Naive thymus-derived CD4-positive, alpha-beta T cell (primary cell): ENCODE measurements at regions of chr6 and their contacts with region 1.

Region 1: DNA sequence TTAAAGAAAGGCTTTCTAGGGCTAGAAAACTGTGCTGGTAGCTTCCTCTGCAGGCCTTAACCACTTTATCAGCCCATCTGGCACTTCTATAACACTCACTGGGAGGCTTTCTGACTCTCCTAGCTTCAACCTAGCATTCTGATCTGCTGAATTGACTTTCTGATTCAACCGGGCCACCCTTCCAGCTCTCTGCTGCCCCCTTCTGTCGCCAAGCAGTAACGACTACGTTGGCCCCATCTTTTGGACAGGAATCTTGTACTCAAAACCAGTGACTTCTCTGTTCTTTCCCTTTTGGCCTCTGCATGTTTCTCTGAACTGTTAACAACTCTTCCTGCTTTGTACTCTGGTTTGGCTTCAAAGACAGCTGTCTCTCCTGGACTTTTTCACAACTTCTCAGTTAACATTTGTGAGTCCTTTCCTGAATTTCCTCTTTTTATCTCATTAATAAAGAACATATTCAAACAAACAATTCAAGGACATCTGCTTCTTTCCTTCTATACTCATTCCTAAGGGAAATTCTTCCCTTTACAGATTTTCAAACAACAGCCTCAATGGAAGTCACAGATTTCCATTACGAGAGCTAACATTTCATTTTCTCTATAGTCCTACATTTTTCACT is 43.9 kb upstream of the FAM135A start:
- DNase-seq: peak; percentile 26 to 64 (median 58)
- ATAC-seq: peak; percentile 92
- H3K4me3 ChIP-seq: no peak overlapping the region
- H3K4me3 Mint-ChIP-seq: no peak overlapping the region
- H3K27ac ChIP-seq: no peak overlapping the region
- H3K27ac Mint-ChIP-seq: no peak overlapping the region
- H3K4me1 ChIP-seq: no peaks in the 10 kb centered on the region
- H3K4me1 Mint-ChIP-seq: peaks cover 0 to 7% (median 0%) of the 10 kb centered on the region in 7 donors
- H3K27me3 ChIP-seq: no peaks in the 10 kb centered on the region
- H3K27me3 Mint-ChIP-seq: peaks cover 10 to 39% (median 19%) of the 10 kb centered on the region in 5 donors

Region 2: GRCh38 chr6:70221025-70221714 is 148.3 kb before region 1 on chr6:
- CTCF ChIA-PET with region 1: interaction called, 10 read pairs
- POLR2A ChIA-PET with region 1: no interaction called
- intact Hi-C with region 1: loop called in 1 of 2 experiments (anchors 1 kb)
- DNase-seq: peak in 4 of 9 donors; percentile 3 to 16 (median 11)
- ATAC-seq: peak; percentile 50
- H3K4me3 ChIP-seq: no peak overlapping the region
- H3K4me3 Mint-ChIP-seq: no peak overlapping the region
- H3K27ac ChIP-seq: no peak overlapping the region
- H3K27ac Mint-ChIP-seq: no peak overlapping the region
- H3K4me1 ChIP-seq: no peaks in the 10 kb centered on the region
- H3K4me1 Mint-ChIP-seq: peaks cover 0 to 1% (median 0%) of the 10 kb centered on the region in 7 donors
- H3K27me3 ChIP-seq: no peaks in the 10 kb centered on the region
- H3K27me3 Mint-ChIP-seq: peaks cover 4 to 31% (median 7%) of the 10 kb centered on the region in 5 donors

Region 3: GRCh38 chr6:70310063-70310694 is 59.3 kb before region 1 on chr6:
- CTCF ChIA-PET with region 1: interaction called, 11 read pairs
- POLR2A ChIA-PET with region 1: no interaction called
- intact Hi-C with region 1: loop called (anchors 1 kb)
- DNase-seq: peak in 5 of 9 donors; percentile 7 to 21 (median 11)
- ATAC-seq: no peak
- H3K4me3 ChIP-seq: no peak overlapping the region
- H3K4me3 Mint-ChIP-seq: no peak overlapping the region
- H3K27ac ChIP-seq: no peak overlapping the region
- H3K27ac Mint-ChIP-seq: no peak overlapping the region
- H3K4me1 ChIP-seq: no peaks in the 10 kb centered on the region
- H3K4me1 Mint-ChIP-seq: peaks cover 0 to under 1% (median 0%) of the 10 kb centered on the region in 7 donors
- H3K27me3 ChIP-seq: no peaks in the 10 kb centered on the region
- H3K27me3 Mint-ChIP-seq: peaks cover 9 to 41% (median 28%) of the 10 kb centered on the region in 5 donors

Region 4: GRCh38 chr6:70398783-70399728 is 29.6 kb after region 1 on chr6:
- CTCF ChIA-PET with region 1: no interaction called
- POLR2A ChIA-PET with region 1: no interaction called
- intact Hi-C with region 1: no loop called
- DNase-seq: no peak
- ATAC-seq: no peak
- H3K4me3 ChIP-seq: no peak overlapping the region
- H3K4me3 Mint-ChIP-seq: no peak overlapping the region
- H3K27ac ChIP-seq: no peak overlapping the region
- H3K27ac Mint-ChIP-seq: no peak overlapping the region
- H3K4me1 ChIP-seq: no peaks in the 10 kb centered on the region
- H3K4me1 Mint-ChIP-seq: peaks cover 0 to 3% (median 0%) of the 10 kb centered on the region in 7 donors
- H3K27me3 ChIP-seq: no peaks in the 10 kb centered on the region
- H3K27me3 Mint-ChIP-seq: peaks cover 28 to 50% (median 31%) of the 10 kb centered on the region in 5 donors

Region 5: GRCh38 chr6:70717038-70717801 is 347.8 kb after region 1 on chr6:
- CTCF ChIA-PET with region 1: no interaction called
- POLR2A ChIA-PET with region 1: no interaction called
- intact Hi-C with region 1: no loop called
- DNase-seq: peak in 6 of 9 donors; percentile 20 to 63 (median 42)
- ATAC-seq: peak; percentile 84
- H3K4me3 ChIP-seq: no peak overlapping the region
- H3K4me3 Mint-ChIP-seq: peak overlapping the region in 9 of 10 donors; percentile 0 to 61 (median 36)
- H3K27ac ChIP-seq: no peak overlapping the region
- H3K27ac Mint-ChIP-seq: peak overlapping the region in 8 of 9 donors; percentile 1 to 83 (median 64)
- H3K4me1 ChIP-seq: peaks cover 8 to 17% of the 10 kb centered on the region in 2 donors
- H3K4me1 Mint-ChIP-seq: peaks cover 28 to 72% (median 64%) of the 10 kb centered on the region in 7 donors
- H3K27me3 ChIP-seq: no peaks in the 10 kb centered on the region
- H3K27me3 Mint-ChIP-seq: no peaks in the 10 kb centered on the region